Sciatic nerve (tissue), 2 donors: ENCODE measurements at regions of chr3 and their contacts with region 1.

Region 1: DNA sequence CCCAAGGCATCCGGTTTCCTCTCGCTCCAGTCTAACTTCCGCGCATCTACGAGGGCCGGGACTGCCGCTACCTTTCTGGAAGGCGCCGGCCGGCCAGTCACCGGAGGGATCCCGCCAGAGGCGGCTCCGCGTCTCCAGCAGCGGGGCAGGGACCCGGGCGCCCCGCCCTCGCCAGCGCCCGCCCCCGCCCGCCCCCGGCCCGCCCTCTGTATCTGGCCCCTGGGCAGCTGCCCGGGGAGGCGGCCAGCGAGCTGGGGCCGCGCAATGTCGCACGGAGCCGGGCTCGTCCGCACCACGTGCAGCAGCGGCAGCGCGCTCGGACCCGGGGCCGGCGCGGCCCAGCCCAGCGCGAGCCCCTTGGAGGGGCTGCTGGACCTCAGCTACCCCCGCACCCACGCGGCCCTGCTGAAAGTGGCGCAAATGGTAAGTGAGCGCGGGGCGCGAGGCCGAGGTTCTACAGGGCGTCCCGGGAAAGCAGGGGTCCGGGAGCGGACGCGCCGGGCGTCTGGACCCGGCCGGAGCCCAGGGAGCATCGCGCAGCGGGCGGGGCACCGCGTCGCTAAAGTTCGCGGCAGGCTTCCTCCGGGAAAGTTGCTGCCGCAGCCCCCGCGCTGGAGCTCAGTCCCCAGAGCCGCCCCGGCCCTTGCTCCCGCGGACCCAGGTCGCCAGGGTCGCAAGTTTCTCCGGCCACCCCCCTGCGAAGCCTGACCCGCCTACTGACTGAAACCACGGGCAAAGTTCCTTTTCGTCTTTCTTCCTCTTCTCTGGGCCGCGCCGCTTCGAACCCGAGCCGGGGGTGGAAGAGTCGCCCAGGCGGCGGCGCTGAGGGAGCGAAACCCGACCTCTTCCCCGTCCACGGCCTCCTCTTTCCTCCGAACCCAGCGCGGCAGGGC is at the start of gene CMTM7:
- DNase-seq: peak; percentile 82
- ATAC-seq: peak; percentile 81
- total RNA-seq, gene CMTM7: 19.5 TPM

Region 2: DNA sequence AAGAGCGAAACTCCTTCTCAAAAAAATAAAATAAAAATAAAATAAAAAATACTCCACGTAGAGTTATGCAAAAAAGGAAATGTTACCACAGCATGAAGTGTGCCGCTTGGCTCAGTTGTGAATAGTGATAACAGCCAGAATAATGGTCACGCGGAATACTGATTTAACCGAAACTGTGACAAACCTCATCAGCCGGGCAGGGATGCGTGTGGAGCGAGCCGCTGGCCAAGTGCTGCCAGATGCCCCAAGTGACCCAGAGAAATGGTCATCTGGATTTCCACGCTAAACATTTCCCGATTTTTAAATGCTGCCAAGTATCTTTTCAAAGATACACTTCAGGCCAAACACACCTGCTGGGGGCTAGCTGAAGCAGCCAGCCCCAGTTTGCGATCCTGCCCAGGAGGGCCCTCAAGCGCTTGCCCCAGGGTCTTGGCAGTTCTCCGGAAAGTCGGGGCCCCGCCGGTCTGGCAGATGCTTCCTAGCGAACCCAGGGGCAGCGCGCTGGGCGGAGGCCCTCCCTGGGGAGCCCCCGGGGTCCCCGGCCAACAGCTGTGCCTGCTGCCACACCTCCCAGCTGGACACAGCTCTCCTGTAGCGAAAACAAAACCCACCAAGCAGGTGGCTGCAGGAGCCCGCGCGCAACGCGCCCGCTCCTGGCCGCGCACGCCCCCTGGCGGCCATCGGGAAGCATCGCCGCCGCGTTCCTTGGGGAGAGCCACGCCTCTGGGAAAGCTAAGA is 75.6 kb after region 1 on chr3:
- intact Hi-C with region 1: loop called (anchors 10 kb)
- DNase-seq: peak; percentile 88
- ATAC-seq: peak; percentile 80